ENCODE measurements at regions of chr2 and their contacts with region 1.

Region 1: DNA sequence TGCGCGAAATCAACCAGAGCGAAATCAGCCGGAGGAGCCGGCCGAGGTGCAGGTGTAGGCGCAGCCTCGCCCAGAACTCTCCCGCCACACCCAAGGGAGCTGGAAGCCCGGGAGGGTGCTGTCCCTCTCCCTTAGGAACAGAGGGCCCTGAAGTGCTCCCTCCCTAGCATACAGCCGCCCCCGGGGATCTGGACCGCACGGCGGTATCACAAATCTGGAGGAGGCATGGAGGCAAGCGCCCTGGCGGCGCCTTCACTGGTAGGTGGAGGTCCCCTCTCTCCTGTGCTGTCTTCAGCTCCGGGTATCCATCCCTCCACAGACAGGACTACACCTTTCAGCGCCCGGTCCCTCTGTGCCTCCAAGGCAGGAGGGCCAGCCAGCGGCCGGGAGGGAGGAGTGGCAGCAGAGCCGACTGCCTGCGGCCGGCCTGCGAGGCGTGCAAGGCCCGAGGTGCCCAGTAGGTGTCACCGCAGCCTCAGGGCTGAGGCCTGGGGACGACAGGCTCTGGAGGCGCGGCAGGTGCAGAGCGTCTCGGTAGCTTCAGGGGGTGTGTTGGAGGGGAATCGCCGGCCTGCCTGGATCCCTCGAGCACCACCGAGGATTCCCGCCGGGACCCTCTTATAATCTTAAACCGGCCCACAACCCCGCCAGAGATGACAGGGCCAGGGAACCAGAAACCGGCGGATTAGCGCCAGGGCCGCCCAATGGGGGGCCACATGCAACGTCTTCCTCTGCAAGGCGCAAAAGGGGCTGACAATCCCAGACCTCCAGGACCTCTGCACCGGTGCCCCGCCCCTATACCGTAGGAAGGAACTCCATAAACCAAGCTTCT is 2.8 kb downstream of the IHH start:
- DNase-seq: peak; percentile 93

Region 2: GRCh38 chr2:219031005-219031738 is 26.8 kb before region 1 on chr2:
- intact Hi-C with region 1: loop called in 1 of 2 experiments (anchors 1 kb)
- DNase-seq: no peak

Region 3: DNA sequence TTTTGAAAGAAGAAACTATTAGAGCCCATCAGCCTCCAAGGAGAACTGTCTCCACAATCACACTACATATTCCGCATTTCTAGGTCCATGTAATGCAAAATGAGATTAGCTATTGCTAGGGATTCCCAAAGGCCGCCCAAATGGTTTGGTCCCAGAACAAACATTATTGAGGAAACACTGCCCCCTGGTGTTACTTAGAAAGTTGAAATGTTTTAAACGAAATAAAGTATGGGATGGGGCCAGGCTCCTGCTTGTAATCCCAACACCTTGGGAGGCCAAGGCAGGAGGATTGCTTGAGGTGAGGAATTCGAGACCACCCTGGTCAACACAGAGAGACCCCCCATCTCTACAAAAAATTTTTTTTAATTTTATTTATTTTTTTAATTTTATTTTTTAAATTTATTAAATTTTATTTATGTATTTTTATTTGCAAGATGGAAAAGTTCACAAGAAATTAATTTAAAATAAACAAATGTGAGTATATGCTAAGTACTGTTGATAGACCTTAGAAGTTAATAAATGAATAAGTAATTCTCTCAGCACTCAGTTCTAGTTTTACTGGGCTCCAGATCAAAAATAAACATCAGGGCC is 97.2 kb after region 1 on chr2:
- intact Hi-C with region 1: loop called (anchors 1 to 2 kb)
- DNase-seq: no peak